A549 (cell line): ENCODE measurements at regions of chr14 and their contacts with region 1.

Region 1: GRCh38 chr14:91897106-91897701 is 29.9 kb upstream of the TC2N start:
- DNase-seq: peak in 1 of 2 experiments; percentile 56
- ATAC-seq: peak in 1 of 2 experiments; percentile 20; a peak in 2 of 6 replicates
- H3K4me3 ChIP-seq: no peak overlapping the region
- H3K27ac ChIP-seq: no peak overlapping the region
- H3K4me1 ChIP-seq: no peaks in the 10 kb centered on the region
- CTCF ChIP-seq: no peak
- EP300 ChIP-seq: no peak
- POLR2A ChIP-seq: no peak
- RAD21 ChIP-seq: no peak

Region 2: GRCh38 chr14:91911474-91912032 is 14.3 kb after region 1 on chr14:
- CTCF ChIA-PET with region 1: interaction called, 32 read pairs
- POLR2A ChIA-PET with region 1: no interaction called
- DNase-seq: peak; percentile 56 to 68
- ATAC-seq: peak; percentile 94 to 97
- H3K4me3 ChIP-seq: no peak overlapping the region
- H3K27ac ChIP-seq: no peak overlapping the region
- H3K4me1 ChIP-seq: no peaks in the 10 kb centered on the region; the same call in 2 of the 3 replicates
- CTCF ChIP-seq: peak; percentile 70
- EP300 ChIP-seq: no peak
- POLR2A ChIP-seq: no peak
- RAD21 ChIP-seq: peak; percentile 85 to 87